ENCODE measurements at regions of chr10 and their contacts with region 1.

Region 1: GRCh38 chr10:68208424-68209042 is 23.4 kb downstream of the ATOH7 start:
- DNase-seq: peak; percentile 72
- ATAC-seq: peak; percentile 97
- H3K4me3 ChIP-seq: peak overlapping the region in 1 of 3 experiments; percentile 11; a peak in 1 of 6 replicates
- H3K27ac ChIP-seq: no peak overlapping the region
- H3K4me1 ChIP-seq: peaks cover 7% of the 10 kb centered on the region; the same call in 1 of the 2 replicates
- H3K27me3 ChIP-seq: 0 out of 5 replicates have a peak, but pooled peaks cover 0 to 3% of the 10 kb centered on the region in 2 experiments
- CTCF ChIP-seq: peak; percentile 95
- EP300 ChIP-seq: no peak
- POLR2A ChIP-seq: no peak
- RAD21 ChIP-seq: peak; percentile 76

Region 2: GRCh38 chr10:67788025-67788886 is 420.3 kb before region 1 on chr10:
- CTCF ChIA-PET with region 1: interaction called, 3 read pairs
- POLR2A ChIA-PET with region 1: no interaction called
- in situ Hi-C with region 1: no loop called
- intact Hi-C with region 1: loop called (anchors 2 kb)
- DNase-seq: peak; percentile 42
- ATAC-seq: peak; percentile 95
- H3K4me3 ChIP-seq: peak overlapping the region in 1 of 3 experiments; percentile 49; a peak in 4 of 6 replicates
- H3K27ac ChIP-seq: no peak overlapping the region
- H3K4me1 ChIP-seq: peaks cover 28% of the 10 kb centered on the region
- H3K27me3 ChIP-seq: no peaks in the 10 kb centered on the region
- CTCF ChIP-seq: peak; percentile 96
- EP300 ChIP-seq: no peak
- POLR2A ChIP-seq: no peak
- RAD21 ChIP-seq: peak; percentile 82

Region 3: DNA sequence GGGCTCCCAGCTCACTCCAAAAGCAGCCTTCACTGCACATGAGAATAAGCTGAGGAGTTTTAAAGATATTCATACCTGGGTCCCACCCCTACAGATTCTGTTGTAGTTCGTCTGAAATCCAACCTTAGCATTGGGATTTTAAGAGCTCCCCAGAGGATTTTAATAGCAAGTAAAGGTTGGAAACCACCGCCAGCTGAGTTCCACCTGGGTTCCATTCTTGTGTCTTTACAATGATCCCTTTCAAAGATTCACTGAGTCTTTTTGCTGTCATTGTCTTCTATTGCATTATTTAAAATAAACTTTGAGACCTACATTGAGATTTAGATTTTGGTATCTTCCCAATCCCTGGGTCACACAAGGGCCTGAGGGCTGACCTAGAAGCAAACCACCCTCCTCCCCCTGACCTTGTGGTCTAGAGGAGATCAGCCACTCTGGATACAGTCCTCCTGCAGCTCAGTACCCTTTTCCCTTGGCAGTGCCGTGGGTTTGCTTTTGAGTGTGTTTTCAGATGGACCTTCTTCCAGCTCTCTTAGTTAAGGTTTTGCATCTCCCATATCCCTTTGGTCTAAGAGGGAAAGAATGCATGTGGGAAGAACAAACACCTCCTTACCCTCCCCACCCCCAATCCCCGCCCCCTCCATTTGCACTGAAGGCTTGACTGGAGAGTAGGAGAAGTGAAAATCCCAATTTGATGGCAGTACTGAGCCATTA is 346.6 kb before region 1 on chr10:
- CTCF ChIA-PET with region 1: interaction called, 11 read pairs
- POLR2A ChIA-PET with region 1: no interaction called
- in situ Hi-C with region 1: loop called (anchors 10 kb)
- intact Hi-C with region 1: no loop called
- DNase-seq: no peak
- ATAC-seq: peak; percentile 55; the same call in 2 of the 3 replicates
- H3K4me3 ChIP-seq: no peak overlapping the region
- H3K27ac ChIP-seq: no peak overlapping the region
- H3K4me1 ChIP-seq: peaks cover 4% of the 10 kb centered on the region; the same call in 1 of the 2 replicates
- H3K27me3 ChIP-seq: no peaks in the 10 kb centered on the region; a peak in 1 of 5 replicates
- CTCF ChIP-seq: no peak
- EP300 ChIP-seq: no peak
- POLR2A ChIP-seq: no peak
- RAD21 ChIP-seq: no peak

Region 4: GRCh38 chr10:68082872-68083271 is 125.7 kb before region 1 on chr10:
- CTCF ChIA-PET with region 1: interaction called, 3 read pairs
- POLR2A ChIA-PET with region 1: no interaction called
- in situ Hi-C with region 1: loop called (anchors 10 kb)
- intact Hi-C with region 1: loop called (anchors 1 kb)
- DNase-seq: no peak
- ATAC-seq: no peak
- H3K4me3 ChIP-seq: no peak overlapping the region
- H3K27ac ChIP-seq: no peak overlapping the region
- H3K4me1 ChIP-seq: no peaks in the 10 kb centered on the region
- H3K27me3 ChIP-seq: 0 out of 5 replicates have a peak, but pooled peaks cover 0 to 4% of the 10 kb centered on the region in 2 experiments
- CTCF ChIP-seq: peak; percentile 27; the same call in 1 of the 2 replicates
- EP300 ChIP-seq: no peak
- POLR2A ChIP-seq: no peak
- RAD21 ChIP-seq: no peak

Region 5: GRCh38 chr10:68156373-68157185 is 52.0 kb before region 1 on chr10:
- CTCF ChIA-PET with region 1: no interaction called
- POLR2A ChIA-PET with region 1: no interaction called
- in situ Hi-C with region 1: no loop called
- intact Hi-C with region 1: loop called (anchors 5 kb)
- DNase-seq: peak; percentile 57
- ATAC-seq: peak; percentile 67
- H3K4me3 ChIP-seq: no peak overlapping the region
- H3K27ac ChIP-seq: no peak overlapping the region
- H3K4me1 ChIP-seq: peaks cover 13% of the 10 kb centered on the region
- H3K27me3 ChIP-seq: no peaks in the 10 kb centered on the region
- CTCF ChIP-seq: peak; percentile 76
- EP300 ChIP-seq: no peak
- POLR2A ChIP-seq: no peak
- RAD21 ChIP-seq: peak; percentile 66; the same call in 1 of the 2 replicates

Region 6: DNA sequence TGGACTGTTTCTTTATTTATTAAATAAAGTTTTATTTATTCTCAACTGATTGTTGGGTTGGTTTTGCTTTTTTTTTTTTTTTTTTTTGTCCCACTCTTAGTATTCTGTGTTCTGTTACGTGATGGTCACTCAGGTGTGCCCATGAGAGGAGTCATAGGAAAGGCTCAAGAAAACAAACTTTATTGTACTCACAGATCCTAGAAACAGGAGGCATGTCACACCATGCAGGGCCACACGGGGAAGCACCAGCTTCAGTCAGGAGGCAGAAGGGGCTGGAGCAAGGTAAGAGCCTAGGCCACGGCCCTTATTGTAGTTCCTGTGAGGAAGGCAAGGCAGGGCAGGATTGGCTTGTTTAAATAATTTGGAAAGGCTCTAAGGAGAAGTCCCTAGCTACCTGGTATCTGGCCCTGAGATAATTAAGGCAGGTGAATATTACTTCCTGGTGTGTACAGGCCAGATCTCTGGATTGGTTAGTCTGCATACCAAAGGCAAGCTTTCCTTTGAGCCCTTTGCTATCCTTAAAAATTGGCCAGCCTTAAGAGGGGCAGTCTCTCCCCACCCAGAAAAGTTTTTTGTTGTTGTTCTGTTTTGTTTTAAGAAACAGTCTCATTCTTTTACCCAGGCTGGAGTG is 15.1 kb after region 1 on chr10:
- CTCF ChIA-PET with region 1: no interaction called
- POLR2A ChIA-PET with region 1: no interaction called
- in situ Hi-C with region 1: no loop called
- intact Hi-C with region 1: no loop called
- DNase-seq: peak; percentile 23
- ATAC-seq: peak; percentile 99
- H3K4me3 ChIP-seq: no peak overlapping the region
- H3K27ac ChIP-seq: no peak overlapping the region
- H3K4me1 ChIP-seq: no peaks in the 10 kb centered on the region
- H3K27me3 ChIP-seq: no peaks in the 10 kb centered on the region; a peak in 1 of 5 replicates
- CTCF ChIP-seq: peak; percentile 37; the same call in 1 of the 2 replicates
- EP300 ChIP-seq: no peak
- POLR2A ChIP-seq: no peak
- RAD21 ChIP-seq: no peak

Region 7: DNA sequence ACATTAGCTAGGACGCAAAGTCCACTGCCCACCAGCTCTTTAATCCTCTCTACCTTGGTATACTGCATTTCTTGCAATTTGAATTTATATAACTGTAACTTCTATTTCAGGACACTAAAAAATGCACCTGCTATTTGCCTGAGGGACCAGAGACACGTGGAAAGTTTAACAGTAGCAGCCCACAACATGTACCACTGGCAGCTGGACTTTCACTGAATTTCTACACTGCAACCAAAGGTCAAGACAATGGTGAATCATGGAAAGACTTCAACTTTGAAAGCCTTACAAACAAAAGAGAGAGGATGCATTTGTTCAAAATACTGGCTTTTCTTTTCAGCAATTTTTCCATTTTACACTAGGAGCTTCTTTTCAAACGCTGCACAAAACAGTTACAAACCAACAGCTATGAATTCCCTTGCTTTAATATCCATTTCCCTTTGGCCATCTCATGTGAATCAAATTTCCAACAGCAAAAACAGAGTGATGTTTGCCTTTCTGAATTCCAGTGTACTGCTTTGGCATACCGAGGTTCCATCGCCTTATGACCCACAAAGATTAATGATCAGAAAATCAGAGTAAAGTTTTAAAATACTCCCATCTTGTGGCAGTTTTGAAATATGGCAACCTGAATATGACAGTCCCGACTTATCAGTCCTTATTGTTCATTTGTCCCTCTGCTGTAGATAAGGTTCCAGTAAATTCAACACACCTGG is 93.4 kb after region 1 on chr10:
- CTCF ChIA-PET with region 1: interaction called, 20 read pairs
- POLR2A ChIA-PET with region 1: no interaction called
- in situ Hi-C with region 1: loop called (anchors 5 kb)
- intact Hi-C with region 1: loop called (anchors 1 kb)
- DNase-seq: peak; percentile 50
- ATAC-seq: peak; percentile 75
- H3K4me3 ChIP-seq: no peak overlapping the region
- H3K27ac ChIP-seq: no peak overlapping the region
- H3K4me1 ChIP-seq: peaks cover 41% of the 10 kb centered on the region
- H3K27me3 ChIP-seq: no peaks in the 10 kb centered on the region
- CTCF ChIP-seq: peak; percentile 67
- EP300 ChIP-seq: no peak
- POLR2A ChIP-seq: no peak
- RAD21 ChIP-seq: peak; percentile 44; the same call in 1 of the 2 replicates

Region 8: DNA sequence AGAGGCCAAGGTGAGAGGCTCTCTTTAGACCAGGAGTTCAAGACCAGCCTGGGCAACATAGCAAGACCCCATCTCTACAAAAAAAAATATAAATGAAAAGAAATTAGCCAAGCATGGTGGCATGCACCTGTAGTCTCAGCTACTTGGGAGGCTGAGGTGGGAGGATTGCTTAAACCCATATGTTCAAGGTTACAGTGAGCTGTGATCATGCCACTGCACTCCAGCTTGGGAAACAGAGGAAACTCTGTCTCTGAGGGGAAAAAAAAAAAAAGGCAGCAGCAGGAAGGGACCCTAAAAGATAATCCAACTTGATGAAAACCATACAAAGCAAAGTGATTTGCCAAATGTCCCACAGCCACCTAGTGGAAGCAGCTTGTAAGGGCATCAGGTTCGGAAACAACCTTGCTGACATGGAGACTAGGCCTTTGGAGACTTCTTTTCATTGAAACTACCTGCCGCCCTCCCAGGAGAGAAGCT is 139.8 kb after region 1 on chr10:
- CTCF ChIA-PET with region 1: interaction called, 5 read pairs
- POLR2A ChIA-PET with region 1: no interaction called
- in situ Hi-C with region 1: no loop called
- intact Hi-C with region 1: loop called (anchors 2 kb)
- DNase-seq: peak; percentile 48
- ATAC-seq: peak; percentile 80
- H3K4me3 ChIP-seq: no peak overlapping the region
- H3K27ac ChIP-seq: no peak overlapping the region
- H3K4me1 ChIP-seq: no peaks in the 10 kb centered on the region
- H3K27me3 ChIP-seq: no peaks in the 10 kb centered on the region
- CTCF ChIP-seq: peak; percentile 77
- EP300 ChIP-seq: no peak
- POLR2A ChIP-seq: no peak
- RAD21 ChIP-seq: 0 out of 2 replicates have a peak, but pooled peaks have one; percentile 18

Region 9: GRCh38 chr10:68385740-68386139 is 177.2 kb after region 1 on chr10:
- CTCF ChIA-PET with region 1: no interaction called
- POLR2A ChIA-PET with region 1: no interaction called
- in situ Hi-C with region 1: no loop called
- intact Hi-C with region 1: no loop called
- DNase-seq: no peak
- ATAC-seq: no peak
- H3K4me3 ChIP-seq: no peak overlapping the region
- H3K27ac ChIP-seq: no peak overlapping the region
- H3K4me1 ChIP-seq: no peaks in the 10 kb centered on the region
- H3K27me3 ChIP-seq: no peaks in the 10 kb centered on the region; a peak in 1 of 5 replicates
- CTCF ChIP-seq: no peak
- EP300 ChIP-seq: no peak
- POLR2A ChIP-seq: no peak
- RAD21 ChIP-seq: no peak

Measured in HepG2 (cell line).